CD8-positive, alpha-beta T cell (primary cell): ENCODE measurements at regions of chr3 and their contacts with region 1.

Region 1: DNA sequence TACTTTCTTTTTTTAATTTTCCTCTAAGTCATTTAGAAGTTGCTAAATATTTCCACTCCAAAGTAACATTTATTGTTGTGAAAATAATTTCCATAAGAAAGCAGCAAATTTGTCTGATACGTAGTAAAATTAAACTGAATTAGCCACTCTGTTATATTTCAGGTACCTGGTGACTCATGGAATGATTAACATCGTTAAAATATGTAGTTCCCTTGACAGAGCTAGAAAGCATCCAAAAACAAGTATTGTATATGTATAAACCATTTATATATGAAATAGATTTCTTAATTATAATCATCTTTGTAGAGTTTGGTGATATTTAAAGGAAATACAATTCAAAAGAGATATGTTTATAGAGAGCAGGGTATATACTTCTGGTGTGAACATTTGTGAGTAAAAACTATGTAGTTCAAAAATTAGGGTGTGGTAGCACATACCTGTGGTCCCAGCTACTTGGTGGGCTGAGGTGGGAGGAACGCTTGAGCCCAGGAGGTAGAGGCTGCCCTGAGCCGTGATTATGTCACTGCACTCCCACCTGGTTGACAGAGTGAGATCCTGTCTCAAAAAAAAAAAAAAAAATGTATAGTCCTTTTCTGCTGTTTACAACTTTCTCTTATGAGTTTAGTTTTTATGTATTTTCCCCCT is 36.6 kb downstream of the ATP11B start:
- DNase-seq: no peak
- ATAC-seq: no peak
- H3K4me3 ChIP-seq: no peak overlapping the region
- H3K4me3 Mint-ChIP-seq: no peak overlapping the region
- H3K27ac ChIP-seq: no peak overlapping the region
- H3K27ac Mint-ChIP-seq: no peak overlapping the region
- H3K4me1 ChIP-seq: no peaks in the 10 kb centered on the region
- H3K4me1 Mint-ChIP-seq: peaks cover 30% of the 10 kb centered on the region
- H3K27me3 ChIP-seq: no peaks in the 10 kb centered on the region
- H3K27me3 Mint-ChIP-seq: no peaks in the 10 kb centered on the region
- CTCF ChIP-seq: no peak

Region 2: DNA sequence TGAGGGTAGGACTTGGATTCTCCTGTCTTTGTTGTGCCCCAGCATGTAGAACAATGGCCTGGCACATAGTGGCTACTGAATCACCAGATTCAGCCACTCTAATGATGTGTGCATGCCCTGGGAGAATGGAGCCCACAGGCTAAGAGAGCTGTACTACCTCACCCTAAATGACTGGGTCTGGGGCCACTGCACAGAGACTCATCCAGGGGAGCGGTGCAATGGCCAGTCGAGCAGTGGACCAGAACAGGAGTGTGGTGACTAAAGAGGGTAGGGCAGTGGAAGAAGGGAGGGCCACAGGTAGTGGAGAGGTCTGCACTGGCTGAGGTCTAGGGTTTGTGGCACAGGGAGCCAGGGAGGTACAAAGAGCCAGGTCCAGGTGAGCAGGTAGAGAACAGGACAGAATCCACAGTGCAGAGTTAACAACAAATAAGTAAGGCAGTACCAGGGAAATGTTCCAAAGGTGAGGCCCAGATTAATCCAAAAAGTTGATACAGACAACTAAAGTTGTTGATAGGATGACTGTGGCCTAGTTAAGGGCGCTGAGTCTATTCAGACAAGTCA is 179.2 kb before region 1 on chr3:
- CTCF ChIA-PET with region 1: no interaction called
- POLR2A ChIA-PET with region 1: no interaction called
- intact Hi-C with region 1: no loop called
- DNase-seq: no peak
- ATAC-seq: no peak
- H3K4me3 ChIP-seq: no peak overlapping the region
- H3K4me3 Mint-ChIP-seq: no peak overlapping the region
- H3K27ac ChIP-seq: no peak overlapping the region
- H3K27ac Mint-ChIP-seq: no peak overlapping the region
- H3K4me1 ChIP-seq: no peaks in the 10 kb centered on the region
- H3K4me1 Mint-ChIP-seq: no peaks in the 10 kb centered on the region
- H3K27me3 ChIP-seq: no peaks in the 10 kb centered on the region
- H3K27me3 Mint-ChIP-seq: peaks cover 13% of the 10 kb centered on the region
- CTCF ChIP-seq: no peak

Region 3: DNA sequence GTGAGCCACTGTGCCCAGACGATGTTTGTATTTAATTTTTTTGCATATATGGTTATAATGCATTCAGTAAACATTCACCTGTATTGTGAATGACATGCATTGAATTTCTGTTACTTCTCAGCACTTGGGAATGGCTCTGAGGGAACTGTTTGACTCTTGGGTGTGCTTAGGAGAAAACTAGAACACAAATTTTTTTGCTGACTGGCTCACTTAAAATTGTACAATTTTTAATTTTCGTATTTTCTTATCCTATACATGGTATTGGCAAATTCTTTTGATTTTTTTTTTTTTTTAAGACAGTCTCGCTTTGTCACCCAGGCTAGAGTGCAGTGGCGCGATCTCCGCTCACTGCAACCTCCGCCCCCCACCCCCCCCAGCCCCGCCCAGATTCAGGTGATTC is 29.4 kb before region 1 on chr3:
- CTCF ChIA-PET with region 1: no interaction called
- POLR2A ChIA-PET with region 1: no interaction called
- intact Hi-C with region 1: no loop called
- DNase-seq: no peak
- ATAC-seq: no peak
- H3K4me3 ChIP-seq: no peak overlapping the region
- H3K4me3 Mint-ChIP-seq: no peak overlapping the region
- H3K27ac ChIP-seq: no peak overlapping the region
- H3K27ac Mint-ChIP-seq: no peak overlapping the region
- H3K4me1 ChIP-seq: peaks cover 55% of the 10 kb centered on the region
- H3K4me1 Mint-ChIP-seq: peaks cover 75% of the 10 kb centered on the region
- H3K27me3 ChIP-seq: no peaks in the 10 kb centered on the region
- H3K27me3 Mint-ChIP-seq: no peaks in the 10 kb centered on the region
- CTCF ChIP-seq: no peak

Region 4: DNA sequence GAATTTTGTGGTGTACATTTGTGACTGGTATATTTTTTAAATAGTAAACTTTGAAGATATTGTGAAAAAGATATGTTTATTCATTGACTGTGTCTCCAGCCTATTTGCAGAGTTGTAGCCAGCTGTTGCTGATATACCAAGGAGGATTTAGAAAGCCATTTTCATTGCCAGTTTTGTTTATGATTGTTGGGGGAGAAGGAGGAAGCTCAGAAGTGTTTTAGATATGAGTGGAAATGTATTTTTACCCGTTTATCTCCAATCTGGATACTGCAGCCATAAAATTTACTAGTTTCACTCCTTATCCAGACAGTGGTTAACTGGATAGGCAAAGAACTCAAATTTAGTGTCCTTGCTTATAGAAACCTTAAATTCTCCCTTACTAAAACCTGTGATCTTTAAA is 17.8 kb before region 1 on chr3:
- CTCF ChIA-PET with region 1: no interaction called
- POLR2A ChIA-PET with region 1: no interaction called
- intact Hi-C with region 1: loop called in 1 of 2 experiments (anchors 2 kb)
- DNase-seq: no peak
- ATAC-seq: no peak
- H3K4me3 ChIP-seq: no peak overlapping the region
- H3K4me3 Mint-ChIP-seq: no peak overlapping the region
- H3K27ac ChIP-seq: no peak overlapping the region
- H3K27ac Mint-ChIP-seq: peak overlapping the region; percentile 15
- H3K4me1 ChIP-seq: peaks cover 35% of the 10 kb centered on the region
- H3K4me1 Mint-ChIP-seq: peaks cover 73% of the 10 kb centered on the region
- H3K27me3 ChIP-seq: no peaks in the 10 kb centered on the region
- H3K27me3 Mint-ChIP-seq: no peaks in the 10 kb centered on the region
- CTCF ChIP-seq: no peak